Activated T-helper 1 cell treated with anti-CD3 and anti-CD28 coated beads, Interleukin-12 subunit alpha, Interleukin-12 subunit beta, Interleukin-2, Interleukin-4 antibody, amounts not matched to agents 30 ng/mL and 10 ng/mL and 1 ng/mL, durations not matched to agents 14 hours and 24 hours and 36 hours (primary cell): ENCODE measurements at regions of chr3 and their contacts with region 1.

Region 1: GRCh38 chr3:32684800-32685542 is at the start of gene CNOT10:
- DNase-seq: peak; percentile 96
- H3K4me3 Mint-ChIP-seq: peak within 1 kb of the TSS; percentile 94
- H3K27ac Mint-ChIP-seq: peak within 1 kb of the TSS; percentile 89
- H3K4me1 Mint-ChIP-seq: peaks cover 30% of the 10 kb centered on the region
- H3K27me3 Mint-ChIP-seq: peaks cover 2% of the 10 kb centered on the region
- total RNA-seq, gene CNOT10: 55.5 and 71.3 TPM in 2 replicates

Region 2: DNA sequence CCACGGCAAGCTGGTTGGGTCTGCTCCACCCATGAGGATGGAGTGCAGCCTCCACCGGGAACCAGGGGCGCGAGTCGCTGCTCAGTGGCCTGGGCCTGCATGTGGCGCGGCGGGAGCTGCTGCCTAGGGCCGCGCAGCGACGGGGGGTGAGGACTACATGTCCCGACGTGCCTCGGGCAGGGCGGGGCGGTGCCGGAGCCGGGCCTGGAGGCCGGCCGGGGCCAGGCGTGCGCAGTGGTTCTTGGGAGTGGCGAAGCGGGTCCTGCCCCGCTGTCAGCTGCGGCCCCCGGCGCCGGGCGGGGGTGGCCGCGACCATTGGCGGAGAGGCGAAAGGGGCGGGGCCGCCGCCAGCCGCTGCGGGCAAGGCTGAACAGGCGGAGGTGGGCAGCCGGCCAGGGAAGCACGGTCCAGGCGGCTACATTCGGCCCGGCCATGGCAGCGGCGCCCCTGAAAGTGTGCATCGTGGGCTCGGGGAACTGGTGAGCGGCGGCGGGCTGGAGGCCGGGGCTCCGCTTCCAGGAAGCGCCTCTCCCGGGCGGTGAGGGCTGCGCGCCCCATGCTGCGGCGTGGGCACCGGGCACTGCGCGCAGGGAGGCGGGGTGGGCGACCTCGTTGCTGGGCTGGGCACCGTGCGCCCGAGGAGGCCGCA is 578.6 kb before region 1 on chr3 and contains the start of gene GPD1L:
- intact Hi-C with region 1: loop called (anchors 2 kb)
- DNase-seq: peak; percentile 93
- H3K4me3 Mint-ChIP-seq: peak within 1 kb of the TSS; percentile 97
- H3K27ac Mint-ChIP-seq: peak within 1 kb of the TSS; percentile 89
- H3K4me1 Mint-ChIP-seq: peaks cover 28% of the 10 kb centered on the region
- H3K27me3 Mint-ChIP-seq: no peaks in the 10 kb centered on the region
- total RNA-seq, gene GPD1L: 16.3 and 16.6 TPM in 2 replicates

Region 3: DNA sequence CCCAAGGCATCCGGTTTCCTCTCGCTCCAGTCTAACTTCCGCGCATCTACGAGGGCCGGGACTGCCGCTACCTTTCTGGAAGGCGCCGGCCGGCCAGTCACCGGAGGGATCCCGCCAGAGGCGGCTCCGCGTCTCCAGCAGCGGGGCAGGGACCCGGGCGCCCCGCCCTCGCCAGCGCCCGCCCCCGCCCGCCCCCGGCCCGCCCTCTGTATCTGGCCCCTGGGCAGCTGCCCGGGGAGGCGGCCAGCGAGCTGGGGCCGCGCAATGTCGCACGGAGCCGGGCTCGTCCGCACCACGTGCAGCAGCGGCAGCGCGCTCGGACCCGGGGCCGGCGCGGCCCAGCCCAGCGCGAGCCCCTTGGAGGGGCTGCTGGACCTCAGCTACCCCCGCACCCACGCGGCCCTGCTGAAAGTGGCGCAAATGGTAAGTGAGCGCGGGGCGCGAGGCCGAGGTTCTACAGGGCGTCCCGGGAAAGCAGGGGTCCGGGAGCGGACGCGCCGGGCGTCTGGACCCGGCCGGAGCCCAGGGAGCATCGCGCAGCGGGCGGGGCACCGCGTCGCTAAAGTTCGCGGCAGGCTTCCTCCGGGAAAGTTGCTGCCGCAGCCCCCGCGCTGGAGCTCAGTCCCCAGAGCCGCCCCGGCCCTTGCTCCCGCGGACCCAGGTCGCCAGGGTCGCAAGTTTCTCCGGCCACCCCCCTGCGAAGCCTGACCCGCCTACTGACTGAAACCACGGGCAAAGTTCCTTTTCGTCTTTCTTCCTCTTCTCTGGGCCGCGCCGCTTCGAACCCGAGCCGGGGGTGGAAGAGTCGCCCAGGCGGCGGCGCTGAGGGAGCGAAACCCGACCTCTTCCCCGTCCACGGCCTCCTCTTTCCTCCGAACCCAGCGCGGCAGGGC is 293.1 kb before region 1 on chr3 and contains the start of gene CMTM7:
- intact Hi-C with region 1: loop called (anchors 2 kb)
- DNase-seq: peak; percentile 66
- H3K4me3 Mint-ChIP-seq: peak within 1 kb of the TSS; percentile 98
- H3K27ac Mint-ChIP-seq: peak within 1 kb of the TSS; percentile 98
- H3K4me1 Mint-ChIP-seq: peaks cover 61% of the 10 kb centered on the region
- H3K27me3 Mint-ChIP-seq: no peaks in the 10 kb centered on the region
- total RNA-seq, gene CMTM7: 50.6 and 59.7 TPM in 2 replicates

Region 4: GRCh38 chr3:32510075-32510724 is 174.8 kb before region 1 on chr3:
- intact Hi-C with region 1: loop called (anchors 1 kb)
- DNase-seq: peak; percentile 54
- H3K4me3 Mint-ChIP-seq: no peak overlapping the region
- H3K27ac Mint-ChIP-seq: no peak overlapping the region
- H3K4me1 Mint-ChIP-seq: no peaks in the 10 kb centered on the region
- H3K27me3 Mint-ChIP-seq: peaks cover 3% of the 10 kb centered on the region

Region 5: GRCh38 chr3:32992322-32992692 is 307.3 kb after region 1 on chr3:
- intact Hi-C with region 1: loop called (anchors 1 kb)
- DNase-seq: no peak
- H3K4me3 Mint-ChIP-seq: peak overlapping the region; percentile 73
- H3K27ac Mint-ChIP-seq: peak overlapping the region; percentile 93
- H3K4me1 Mint-ChIP-seq: peaks cover 69% of the 10 kb centered on the region
- H3K27me3 Mint-ChIP-seq: no peaks in the 10 kb centered on the region

Region 6: GRCh38 chr3:33096093-33096868 is 411.3 kb after region 1 on chr3:
- intact Hi-C with region 1: loop called (anchors 2 kb)
- DNase-seq: peak; percentile 39
- H3K4me3 Mint-ChIP-seq: peak overlapping the region; percentile 97
- H3K27ac Mint-ChIP-seq: peak overlapping the region; percentile 86
- H3K4me1 Mint-ChIP-seq: peaks cover 43% of the 10 kb centered on the region
- H3K27me3 Mint-ChIP-seq: peaks cover 2% of the 10 kb centered on the region

Region 7: DNA sequence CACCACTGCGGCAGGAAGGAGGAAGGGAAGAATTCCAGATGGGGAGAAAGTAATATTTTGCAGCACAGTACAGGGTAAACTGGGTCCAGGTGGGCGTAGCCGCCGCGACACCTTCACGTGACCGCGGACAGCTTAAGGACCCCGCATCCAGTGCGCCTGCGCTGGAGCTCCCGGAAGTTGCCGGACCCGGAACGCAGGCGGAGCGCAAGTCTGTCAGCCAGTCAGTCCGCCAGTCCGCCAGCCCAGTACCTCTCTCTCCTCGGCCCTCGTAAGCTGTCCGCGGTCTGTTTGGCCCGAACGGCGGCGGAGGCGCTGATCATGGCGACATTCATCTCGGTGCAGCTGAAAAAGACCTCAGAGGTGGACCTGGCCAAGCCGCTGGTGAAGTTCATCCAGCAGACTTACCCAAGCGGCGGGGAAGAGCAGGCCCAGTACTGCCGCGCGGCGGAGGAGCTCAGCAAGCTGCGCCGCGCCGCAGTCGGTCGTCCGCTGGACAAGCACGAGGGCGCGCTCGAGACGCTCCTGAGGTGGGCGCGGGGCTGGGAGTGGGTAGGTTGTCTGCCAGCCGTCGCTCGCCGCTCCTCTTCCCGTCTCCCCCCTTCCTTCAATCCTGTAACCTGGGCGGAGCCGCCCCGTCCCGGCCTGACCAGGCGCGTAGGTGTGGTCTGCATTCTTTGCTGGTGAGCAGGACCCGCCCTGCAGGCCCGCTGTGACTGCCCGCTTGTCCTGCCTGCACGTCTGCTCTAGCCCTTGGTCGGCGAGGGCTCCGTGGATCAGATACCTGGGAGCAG is 1113.6 kb after region 1 on chr3 and contains the start of gene PDCD6IP:
- intact Hi-C with region 1: loop called (anchors 5 kb)
- DNase-seq: peak; percentile 87
- H3K4me3 Mint-ChIP-seq: peak within 1 kb of the TSS; percentile 95
- H3K27ac Mint-ChIP-seq: peak within 1 kb of the TSS; percentile 95
- H3K4me1 Mint-ChIP-seq: peaks cover 48% of the 10 kb centered on the region
- H3K27me3 Mint-ChIP-seq: no peaks in the 10 kb centered on the region
- total RNA-seq, gene PDCD6IP: 171 and 179 TPM in 2 replicates